ENCODE measurements at regions of chr12 and their contacts with region 1.

Region 1: GRCh38 chr12:11015775-11016430 is 6.5 kb downstream of the TAS2R19 start:
- DNase-seq: no peak
- ATAC-seq: no peak

Region 2: GRCh38 chr12:11049674-11050531 is 34.0 kb after region 1 on chr12:
- intact Hi-C with region 1: no loop called
- DNase-seq: no peak
- ATAC-seq: no peak

Region 3: GRCh38 chr12:11067514-11067913 is 51.6 kb after region 1 on chr12:
- intact Hi-C with region 1: loop called in 1 of 2 experiments (anchors 2 kb)
- DNase-seq: peak; percentile 34
- ATAC-seq: peak; percentile 34 to 86

Measured in left cardiac atrium (tissue), 4 donors.